Left ventricle myocardium inferior (tissue), 1 donor: ENCODE measurements at regions of chrX and their contacts with region 1.

Region 1: GRCh38 chrX:123422877-123423276 is 238.8 kb downstream of the GRIA3 start:
- DNase-seq: no peak
- H3K4me3 ChIP-seq: no peak overlapping the region
- H3K27ac ChIP-seq: no peak overlapping the region
- H3K4me1 ChIP-seq: no peaks in the 10 kb centered on the region
- H3K27me3 ChIP-seq: no peaks in the 10 kb centered on the region
- CTCF ChIP-seq: peak; percentile 66

Region 2: GRCh38 chrX:122363112-122363984 is 1059.5 kb before region 1 on chrX:
- intact Hi-C with region 1: no loop called
- DNase-seq: no peak
- H3K4me3 ChIP-seq: no peak overlapping the region
- H3K27ac ChIP-seq: no peak overlapping the region
- H3K4me1 ChIP-seq: no peaks in the 10 kb centered on the region
- H3K27me3 ChIP-seq: no peaks in the 10 kb centered on the region
- CTCF ChIP-seq: no peak

Region 3: GRCh38 chrX:123173833-123174232 is 249.0 kb before region 1 on chrX:
- intact Hi-C with region 1: loop called (anchors 10 kb)
- DNase-seq: no peak
- H3K4me3 ChIP-seq: no peak overlapping the region
- H3K27ac ChIP-seq: no peak overlapping the region
- H3K4me1 ChIP-seq: no peaks in the 10 kb centered on the region
- H3K27me3 ChIP-seq: no peaks in the 10 kb centered on the region
- CTCF ChIP-seq: no peak